Activated naive CD4-positive, alpha-beta T cell treated with anti-CD3 and anti-CD28 coated beads for 36 hours (primary cell): ENCODE measurements at regions of chr2 and their contacts with region 1.

Region 1: GRCh38 chr2:15591692-15592463 is at the start of gene DDX1:
- DNase-seq: peak; percentile 85
- H3K4me3 Mint-ChIP-seq: peak within 1 kb of the TSS; percentile 88
- H3K27ac Mint-ChIP-seq: peak within 1 kb of the TSS; percentile 86
- H3K4me1 Mint-ChIP-seq: peaks cover 36% of the 10 kb centered on the region
- H3K27me3 Mint-ChIP-seq: no peaks in the 10 kb centered on the region
- total RNA-seq, gene DDX1: 61.7 to 64.1 TPM

Region 2: DNA sequence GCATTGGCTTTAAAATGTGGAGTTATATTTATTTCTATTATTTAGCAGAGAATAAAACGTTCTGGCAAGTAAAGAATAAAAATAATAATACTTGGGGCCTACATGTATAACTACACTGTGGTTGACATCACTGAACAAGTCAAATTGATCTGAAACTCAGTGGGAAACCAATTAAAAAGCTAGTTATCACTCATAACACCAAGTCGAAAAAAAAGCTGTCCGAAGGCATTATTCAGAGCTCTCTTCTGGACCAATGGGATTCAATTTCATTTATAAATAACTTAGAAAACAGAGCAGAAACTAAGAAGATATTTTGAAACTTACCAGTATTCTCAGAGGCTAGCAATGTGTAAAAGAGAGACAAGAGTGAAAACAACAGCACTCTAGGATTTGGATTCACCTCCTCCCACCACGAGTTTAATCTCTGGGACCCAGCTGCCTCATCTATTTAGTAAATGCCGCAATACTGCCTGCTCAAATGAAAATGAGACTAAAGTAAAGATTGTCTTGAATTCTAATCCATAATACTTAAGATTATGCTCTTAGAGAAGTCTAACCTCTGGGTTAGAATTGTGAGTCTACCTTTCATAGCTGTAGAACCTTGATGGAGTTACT is 159.1 kb before region 1 on chr2:
- CTCF ChIA-PET with region 1: no interaction called
- intact Hi-C with region 1: no loop called
- DNase-seq: no peak
- H3K4me3 Mint-ChIP-seq: no peak overlapping the region
- H3K27ac Mint-ChIP-seq: no peak overlapping the region
- H3K4me1 Mint-ChIP-seq: peaks cover 5% of the 10 kb centered on the region
- H3K27me3 Mint-ChIP-seq: no peaks in the 10 kb centered on the region

Region 3: DNA sequence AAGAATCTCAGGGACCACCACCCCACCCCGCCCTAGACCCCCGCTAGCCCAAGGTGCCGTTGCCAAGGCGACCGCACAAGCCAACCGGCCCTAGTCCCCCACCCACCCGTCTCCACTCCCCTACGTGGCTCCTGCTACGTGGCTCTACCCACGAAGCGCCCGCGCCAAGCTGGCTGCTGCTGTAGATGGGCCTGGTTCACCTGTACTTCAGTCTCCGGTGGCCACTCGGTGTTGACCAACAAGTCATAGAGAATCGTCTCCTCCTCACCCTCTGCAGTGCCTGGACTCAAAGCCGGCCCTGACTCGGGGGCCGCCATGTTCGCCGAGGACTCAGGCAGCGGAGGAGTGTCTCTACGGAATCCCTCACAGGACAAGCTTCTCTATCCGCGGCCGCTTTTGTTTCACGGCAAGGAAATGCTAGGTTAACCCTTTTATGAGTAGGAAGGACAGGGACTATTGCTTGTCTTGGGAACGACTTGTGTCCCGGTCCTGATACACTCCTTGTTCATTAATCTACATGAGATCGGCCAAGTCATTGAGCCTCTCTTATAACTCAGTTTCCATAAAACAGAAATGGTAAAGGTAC is 30.8 kb before region 1 on chr2 and contains the start of gene NBAS:
- CTCF ChIA-PET with region 1: interaction called, 3 read pairs
- intact Hi-C with region 1: loop called (anchors 1 kb)
- DNase-seq: peak; percentile 94
- H3K4me3 Mint-ChIP-seq: peak within 1 kb of the TSS; percentile 98
- H3K27ac Mint-ChIP-seq: peak within 1 kb of the TSS; percentile 92
- H3K4me1 Mint-ChIP-seq: peaks cover 32% of the 10 kb centered on the region
- H3K27me3 Mint-ChIP-seq: no peaks in the 10 kb centered on the region
- total RNA-seq, gene NBAS: 45.5 to 46.4 TPM